ENCODE measurements at regions of chr12 and their contacts with region 1.

Region 1: GRCh38 chr12:124767066-124767821 is 96.4 kb downstream of the SCARB1 start:
- DNase-seq: peak; percentile 86
- ATAC-seq: peak; percentile 88
- H3K4me3 Mint-ChIP-seq: no peak overlapping the region
- H3K27ac Mint-ChIP-seq: no peak overlapping the region
- H3K4me1 Mint-ChIP-seq: peaks cover 13% of the 10 kb centered on the region
- H3K27me3 Mint-ChIP-seq: peaks cover 46% of the 10 kb centered on the region

Region 2: DNA sequence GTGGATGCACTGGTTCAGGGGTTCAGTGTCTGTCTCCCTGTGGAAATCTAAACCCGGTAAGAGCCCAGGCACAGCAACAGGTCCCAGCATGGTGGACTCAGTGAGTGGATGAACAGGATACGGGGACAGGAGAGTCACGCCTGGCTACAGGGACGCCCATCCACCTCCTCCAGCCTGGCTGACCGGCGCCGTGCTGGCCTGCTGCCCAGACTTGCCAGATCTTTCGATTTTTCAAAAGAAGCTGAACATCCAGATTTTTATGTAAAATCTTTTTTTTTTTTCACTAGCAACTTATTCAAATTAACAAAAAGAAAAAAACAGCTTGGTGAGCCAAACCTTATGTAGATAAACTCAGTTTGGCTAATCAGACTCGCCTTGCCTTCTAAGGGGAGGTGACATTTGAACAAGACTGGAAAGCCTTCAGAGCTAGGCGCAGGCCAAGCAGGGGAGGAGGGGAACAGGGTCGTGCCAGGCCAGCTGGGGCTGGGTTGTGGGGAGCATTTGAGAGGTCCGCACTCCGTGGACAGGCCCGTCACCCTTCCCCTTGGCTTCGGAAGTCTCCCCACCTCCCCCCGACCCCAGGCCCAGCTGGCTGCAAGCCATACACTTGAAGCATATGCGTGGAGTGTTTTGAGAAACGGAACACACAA is 112.1 kb before region 1 on chr12:
- CTCF ChIA-PET with region 1: no interaction called
- DNase-seq: no peak
- ATAC-seq: no peak
- H3K4me3 Mint-ChIP-seq: no peak overlapping the region
- H3K27ac Mint-ChIP-seq: no peak overlapping the region
- H3K4me1 Mint-ChIP-seq: no peaks in the 10 kb centered on the region
- H3K27me3 Mint-ChIP-seq: peaks cover 19% of the 10 kb centered on the region

Region 3: DNA sequence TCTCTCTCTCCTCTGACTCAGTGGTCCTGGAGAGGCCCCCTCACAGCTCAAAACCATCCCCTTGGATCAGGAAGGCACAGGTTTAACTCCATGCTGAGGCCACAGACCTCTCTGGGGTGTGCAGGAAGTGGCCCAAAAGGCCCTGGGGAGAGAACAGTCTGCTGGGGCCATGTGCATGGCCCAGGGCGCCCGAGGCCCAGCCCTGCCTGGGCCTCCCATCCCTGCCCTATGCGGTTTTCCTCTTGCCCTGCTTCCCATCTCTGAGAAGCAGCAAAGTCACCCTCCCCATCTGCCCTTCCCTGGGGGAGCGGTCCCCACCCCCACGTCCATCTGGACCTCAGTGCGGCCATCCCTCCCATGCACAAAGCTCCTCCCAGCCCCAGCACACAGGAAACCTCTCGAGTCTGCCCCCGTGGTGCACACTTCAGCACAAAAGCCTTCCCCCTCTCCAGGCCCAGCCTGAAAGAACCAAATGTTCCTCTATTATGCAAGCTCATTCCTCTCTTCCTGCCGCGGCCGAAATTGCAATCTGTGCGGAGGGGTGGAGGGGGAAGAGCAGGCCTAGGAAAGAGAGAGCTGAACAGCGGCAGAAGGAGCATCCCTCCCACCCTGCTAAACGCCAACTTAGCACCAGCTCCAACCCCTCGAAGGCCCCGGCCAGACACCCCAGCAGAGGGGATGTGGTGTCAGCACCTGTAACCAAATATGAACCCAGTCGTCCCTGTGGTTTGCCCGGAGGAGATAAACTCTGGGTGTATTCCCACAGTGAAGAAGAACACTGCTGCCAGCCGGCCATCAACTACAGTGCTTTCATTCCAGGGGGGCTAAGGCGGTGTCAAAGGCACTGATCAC is 12.1 kb before region 1 on chr12:
- CTCF ChIA-PET with region 1: interaction called, 23 read pairs
- DNase-seq: peak; percentile 62
- ATAC-seq: peak; percentile 71
- H3K4me3 Mint-ChIP-seq: no peak overlapping the region
- H3K27ac Mint-ChIP-seq: peak overlapping the region; percentile 38
- H3K4me1 Mint-ChIP-seq: peaks cover 15% of the 10 kb centered on the region
- H3K27me3 Mint-ChIP-seq: peaks cover 50% of the 10 kb centered on the region

Measured in activated CD8-positive, alpha-beta memory T cell treated with anti-CD3 and anti-CD28 coated beads, Interleukin-2, amount 10 ng/mL, durations not matched to agents 7 days and 5 days (primary cell).